H1 (cell line): ENCODE measurements at regions of chr2 and their contacts with region 1.

Region 1: DNA sequence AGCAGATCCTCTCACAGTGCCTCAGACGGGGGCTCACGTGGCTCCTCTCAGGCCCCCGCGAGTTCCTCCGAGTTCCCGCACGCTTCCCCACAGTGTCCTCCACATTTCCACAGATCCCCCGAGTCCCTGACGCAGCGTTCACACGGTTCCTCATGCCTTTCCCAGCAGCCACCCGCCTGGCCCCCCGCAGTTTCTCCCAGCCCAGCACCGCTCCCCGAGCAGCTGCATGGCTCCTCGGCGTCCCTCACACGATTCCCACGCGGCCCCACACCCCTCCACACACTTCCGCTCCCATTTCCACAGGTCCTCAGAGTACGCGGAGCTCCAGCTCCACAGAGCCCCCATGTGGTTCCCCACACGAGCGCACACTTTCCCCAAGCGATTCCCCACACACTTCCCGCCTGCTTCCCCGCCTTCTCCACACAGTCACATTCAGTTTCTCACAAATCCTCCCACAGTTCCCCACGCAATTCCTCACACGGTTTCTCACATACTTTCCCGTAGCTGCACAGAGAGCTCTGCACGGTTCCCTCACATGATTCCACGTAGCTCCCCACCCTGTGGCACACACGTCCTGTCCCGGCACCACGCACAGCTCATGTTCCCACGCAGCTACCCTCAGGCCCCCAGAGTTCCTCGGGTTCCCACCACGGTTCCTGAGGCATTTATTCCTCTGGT is 39.9 kb downstream of the KIF1A start:
- DNase-seq: no peak
- H3K4me3 ChIP-seq: no peak overlapping the region
- H3K27ac ChIP-seq: no peak overlapping the region
- H3K4me1 ChIP-seq: peaks cover 0 to 2% (median 0%) of the 10 kb centered on the region in 4 experiments; a peak in 3 of 7 replicates
- H3K27me3 ChIP-seq: no peaks in the 10 kb centered on the region
- CTCF ChIP-seq: peak in 1 of 3 experiments; percentile 2; a peak in 1 of 4 replicates
- EP300 ChIP-seq: no peak
- POLR2A ChIP-seq: no peak
- RAD21 ChIP-seq: no peak

Region 2: DNA sequence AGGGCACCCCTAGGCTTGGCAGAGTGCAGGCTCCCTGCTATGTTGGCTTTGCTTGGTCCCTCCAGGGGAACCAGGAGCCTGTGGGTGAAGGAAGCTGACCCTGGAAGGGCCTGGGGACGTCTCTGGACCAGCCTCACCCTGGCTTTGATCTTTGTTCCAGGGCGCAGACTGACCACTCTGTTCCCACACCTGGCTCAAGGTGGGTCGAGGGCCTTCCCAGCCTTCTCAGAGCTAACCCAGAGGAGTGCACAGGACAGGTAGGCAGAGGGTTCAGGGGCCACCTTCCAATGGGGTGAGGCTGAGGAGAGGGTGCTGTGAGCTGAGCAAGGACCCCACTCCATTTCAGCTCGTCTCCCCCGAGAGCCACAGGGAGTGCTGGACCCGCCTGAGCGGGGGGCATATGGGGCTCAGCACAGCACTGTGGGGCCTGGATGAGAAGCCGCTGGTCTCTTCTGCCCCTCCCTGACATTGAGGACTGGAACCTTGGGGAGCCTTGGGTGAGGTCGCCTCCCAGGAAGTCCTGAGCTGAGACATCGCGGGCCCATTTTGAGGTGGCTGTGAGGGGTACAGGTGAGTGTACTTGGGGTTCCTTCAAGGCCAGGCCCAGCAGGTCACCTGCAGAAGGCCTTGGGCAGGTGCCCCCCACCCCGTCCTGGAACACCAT is 91.8 kb before region 1 on chr2:
- CTCF ChIA-PET with region 1: no interaction called
- POLR2A ChIA-PET with region 1: no interaction called
- DNase-seq: peak in 1 of 2 experiments; percentile 38
- H3K4me3 ChIP-seq: no peak overlapping the region
- H3K27ac ChIP-seq: no peak overlapping the region
- H3K4me1 ChIP-seq: peaks cover 0 to 3% (median 0%) of the 10 kb centered on the region in 4 experiments; a peak in 2 of 7 replicates
- H3K27me3 ChIP-seq: no peaks in the 10 kb centered on the region; a peak in 1 of 7 replicates
- CTCF ChIP-seq: no peak
- EP300 ChIP-seq: no peak
- POLR2A ChIP-seq: no peak
- RAD21 ChIP-seq: no peak

Region 3: DNA sequence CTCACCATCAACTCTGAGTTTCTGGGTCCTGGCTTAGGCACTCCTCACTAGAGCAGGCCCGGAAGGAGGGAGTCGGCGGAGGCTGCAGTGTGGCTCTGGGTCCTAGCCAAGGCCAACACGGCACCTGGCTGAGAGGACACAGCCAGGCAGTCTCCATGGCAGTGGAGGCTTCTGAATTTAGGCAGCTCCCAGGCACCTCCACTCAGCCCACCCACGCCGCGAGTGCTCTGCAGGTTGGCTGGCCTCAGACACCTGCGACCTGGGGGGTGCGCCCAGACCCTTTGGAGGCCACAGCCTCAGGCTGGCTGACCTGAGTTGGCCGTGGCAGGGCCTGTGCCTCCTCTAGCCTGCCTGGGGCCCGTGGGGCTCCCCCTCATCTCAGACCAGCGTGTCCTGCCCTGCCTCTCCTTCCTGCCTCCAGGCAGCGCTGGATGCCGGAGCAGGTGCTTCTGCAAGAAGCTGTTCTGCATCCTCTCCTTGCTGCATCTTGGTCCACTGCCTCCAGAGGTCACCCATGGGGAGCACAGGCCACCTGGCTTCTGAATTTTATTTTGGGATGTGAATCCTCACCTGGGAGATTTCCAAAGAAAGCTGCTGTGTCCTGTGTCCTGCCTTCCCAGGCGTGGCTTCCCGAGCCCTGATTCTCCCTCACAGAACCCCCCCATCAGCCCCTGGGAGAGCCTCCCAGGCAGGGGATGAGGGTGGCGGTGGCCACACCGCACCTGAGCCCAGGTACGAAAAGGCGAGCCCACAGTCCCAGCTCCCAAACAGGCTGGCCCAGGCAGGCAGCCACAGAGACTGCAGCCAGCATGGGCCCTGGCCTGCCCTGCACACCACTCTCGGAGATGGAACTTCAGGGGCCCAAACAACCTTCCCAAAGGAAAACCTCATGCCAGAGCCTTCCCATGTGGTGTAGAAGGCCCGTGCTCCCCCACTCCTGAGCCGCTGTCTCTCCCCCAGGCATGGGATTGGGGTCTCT is 65.1 kb before region 1 on chr2:
- CTCF ChIA-PET with region 1: no interaction called
- POLR2A ChIA-PET with region 1: interaction called, 19 read pairs
- DNase-seq: no peak
- H3K4me3 ChIP-seq: no peak overlapping the region
- H3K27ac ChIP-seq: no peak overlapping the region
- H3K4me1 ChIP-seq: no peaks in the 10 kb centered on the region; a peak in 1 of 7 replicates
- H3K27me3 ChIP-seq: no peaks in the 10 kb centered on the region
- CTCF ChIP-seq: peak in 2 of 3 experiments; percentile 31 to 47; a peak in 2 of 4 replicates
- EP300 ChIP-seq: no peak
- POLR2A ChIP-seq: no peak
- RAD21 ChIP-seq: peak in 1 of 2 experiments; percentile 16; a peak in 1 of 4 replicates

Region 4: GRCh38 chr2:240725671-240726070 is 54.5 kb before region 1 on chr2:
- CTCF ChIA-PET with region 1: no interaction called
- POLR2A ChIA-PET with region 1: interaction called, 15 read pairs
- DNase-seq: no peak
- H3K4me3 ChIP-seq: no peak overlapping the region
- H3K27ac ChIP-seq: no peak overlapping the region
- H3K4me1 ChIP-seq: no peaks in the 10 kb centered on the region
- H3K27me3 ChIP-seq: no peaks in the 10 kb centered on the region
- CTCF ChIP-seq: no peak
- EP300 ChIP-seq: no peak
- POLR2A ChIP-seq: 0 out of 3 replicates have a peak, but pooled peaks of 1 of the 2 experiments have one; percentile 1
- RAD21 ChIP-seq: no peak

Region 5: GRCh38 chr2:240749516-240749915 is 30.6 kb before region 1 on chr2:
- CTCF ChIA-PET with region 1: interaction called, 3 read pairs
- POLR2A ChIA-PET with region 1: interaction called, 89 read pairs
- DNase-seq: no peak
- H3K4me3 ChIP-seq: no peak overlapping the region
- H3K27ac ChIP-seq: no peak overlapping the region
- H3K4me1 ChIP-seq: no peaks in the 10 kb centered on the region
- H3K27me3 ChIP-seq: no peaks in the 10 kb centered on the region
- CTCF ChIP-seq: no peak
- EP300 ChIP-seq: no peak
- POLR2A ChIP-seq: no peak
- RAD21 ChIP-seq: no peak

Region 6: GRCh38 chr2:240759454-240759853 is 20.7 kb before region 1 on chr2:
- CTCF ChIA-PET with region 1: interaction called, 4 read pairs
- POLR2A ChIA-PET with region 1: interaction called, 291 read pairs
- DNase-seq: no peak
- H3K4me3 ChIP-seq: no peak overlapping the region
- H3K27ac ChIP-seq: no peak overlapping the region
- H3K4me1 ChIP-seq: no peaks in the 10 kb centered on the region; a peak in 1 of 7 replicates
- H3K27me3 ChIP-seq: no peaks in the 10 kb centered on the region
- CTCF ChIP-seq: no peak
- EP300 ChIP-seq: no peak
- POLR2A ChIP-seq: no peak
- RAD21 ChIP-seq: no peak

Region 7: GRCh38 chr2:240791821-240792628 is 11.9 kb after region 1 on chr2:
- CTCF ChIA-PET with region 1: interaction called, 3 read pairs
- POLR2A ChIA-PET with region 1: interaction called, 291 read pairs
- DNase-seq: no peak
- H3K4me3 ChIP-seq: no peak overlapping the region
- H3K27ac ChIP-seq: no peak overlapping the region
- H3K4me1 ChIP-seq: peaks cover 0 to 11% (median 8%) of the 10 kb centered on the region in 4 experiments; a peak in 5 of 7 replicates
- H3K27me3 ChIP-seq: no peaks in the 10 kb centered on the region
- CTCF ChIP-seq: no peak
- EP300 ChIP-seq: no peak
- POLR2A ChIP-seq: no peak
- RAD21 ChIP-seq: no peak

Region 8: GRCh38 chr2:240819858-240820606 is 39.9 kb after region 1 on chr2 and contains the start of gene KIF1A:
- CTCF ChIA-PET with region 1: no interaction called
- POLR2A ChIA-PET with region 1: interaction called, 45 read pairs
- DNase-seq: peak in 1 of 2 experiments; percentile 84
- H3K4me3 ChIP-seq: peak within 1 kb of the TSS; percentile 69 to 100 (median 80)
- H3K27ac ChIP-seq: peak within 1 kb of the TSS; percentile 67; the same call in 1 of the 2 replicates
- H3K4me1 ChIP-seq: peaks cover 0 to 20% (median 16%) of the 10 kb centered on the region in 4 experiments; a peak in 6 of 7 replicates
- H3K27me3 ChIP-seq: peaks cover 0 to 2% (median 0%) of the 10 kb centered on the region in 4 experiments; a peak in 1 of 7 replicates
- CTCF ChIP-seq: no peak
- EP300 ChIP-seq: no peak
- POLR2A ChIP-seq: peak in 1 of 2 experiments; percentile 74; a peak in 2 of 3 replicates
- RAD21 ChIP-seq: no peak
- total RNA-seq, gene KIF1A: 267 and 281 TPM in 2 replicates

Region 9: DNA sequence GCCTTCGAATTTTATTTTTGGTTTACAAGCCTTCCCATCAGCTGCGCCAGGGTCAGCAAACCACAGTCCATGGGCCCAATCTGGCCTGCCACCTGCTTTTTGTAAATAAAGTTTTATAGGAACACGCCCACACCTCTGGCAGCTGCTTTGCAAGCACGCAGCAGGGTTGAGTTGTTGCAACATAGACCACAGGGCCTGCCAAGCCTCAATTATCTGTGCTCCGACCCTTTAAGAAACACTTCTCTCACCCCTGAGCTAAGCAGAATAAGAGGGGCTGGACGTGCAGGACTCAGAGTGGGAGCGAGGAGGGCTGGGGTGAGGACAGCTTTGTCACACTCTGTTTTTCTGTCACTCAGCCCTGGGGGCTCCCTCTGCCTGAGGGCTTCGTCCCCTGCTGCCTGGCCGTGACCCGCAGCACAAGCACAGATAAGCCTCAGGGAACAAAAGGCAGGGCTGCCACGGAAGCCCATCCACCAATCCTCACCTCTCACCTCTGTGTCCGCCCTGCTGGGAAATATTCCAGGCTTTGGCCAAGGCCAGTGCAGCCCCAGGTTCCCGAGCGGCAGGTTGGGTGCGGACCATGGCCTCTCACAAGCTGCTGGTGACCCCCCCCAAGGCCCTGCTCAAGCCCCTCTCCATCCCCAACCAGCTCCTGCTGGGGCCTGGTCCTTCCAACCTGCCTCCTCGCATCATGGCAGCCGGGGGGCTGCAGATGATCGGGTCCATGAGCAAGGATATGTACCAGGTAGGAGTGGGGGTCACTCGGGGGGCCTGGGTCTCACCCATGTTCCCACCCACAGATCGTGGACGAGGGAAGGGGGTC is 88.3 kb after region 1 on chr2 and contains the start of gene AGXT:
- CTCF ChIA-PET with region 1: no interaction called
- POLR2A ChIA-PET with region 1: no interaction called
- DNase-seq: no peak
- H3K4me3 ChIP-seq: no peak within 1 kb of the TSS
- H3K27ac ChIP-seq: no peak within 1 kb of the TSS
- H3K4me1 ChIP-seq: no peaks in the 10 kb centered on the region
- H3K27me3 ChIP-seq: no peaks in the 10 kb centered on the region
- CTCF ChIP-seq: no peak
- EP300 ChIP-seq: no peak
- POLR2A ChIP-seq: no peak
- RAD21 ChIP-seq: no peak
- total RNA-seq, gene AGXT: not detected in 2 replicates

Region 10: DNA sequence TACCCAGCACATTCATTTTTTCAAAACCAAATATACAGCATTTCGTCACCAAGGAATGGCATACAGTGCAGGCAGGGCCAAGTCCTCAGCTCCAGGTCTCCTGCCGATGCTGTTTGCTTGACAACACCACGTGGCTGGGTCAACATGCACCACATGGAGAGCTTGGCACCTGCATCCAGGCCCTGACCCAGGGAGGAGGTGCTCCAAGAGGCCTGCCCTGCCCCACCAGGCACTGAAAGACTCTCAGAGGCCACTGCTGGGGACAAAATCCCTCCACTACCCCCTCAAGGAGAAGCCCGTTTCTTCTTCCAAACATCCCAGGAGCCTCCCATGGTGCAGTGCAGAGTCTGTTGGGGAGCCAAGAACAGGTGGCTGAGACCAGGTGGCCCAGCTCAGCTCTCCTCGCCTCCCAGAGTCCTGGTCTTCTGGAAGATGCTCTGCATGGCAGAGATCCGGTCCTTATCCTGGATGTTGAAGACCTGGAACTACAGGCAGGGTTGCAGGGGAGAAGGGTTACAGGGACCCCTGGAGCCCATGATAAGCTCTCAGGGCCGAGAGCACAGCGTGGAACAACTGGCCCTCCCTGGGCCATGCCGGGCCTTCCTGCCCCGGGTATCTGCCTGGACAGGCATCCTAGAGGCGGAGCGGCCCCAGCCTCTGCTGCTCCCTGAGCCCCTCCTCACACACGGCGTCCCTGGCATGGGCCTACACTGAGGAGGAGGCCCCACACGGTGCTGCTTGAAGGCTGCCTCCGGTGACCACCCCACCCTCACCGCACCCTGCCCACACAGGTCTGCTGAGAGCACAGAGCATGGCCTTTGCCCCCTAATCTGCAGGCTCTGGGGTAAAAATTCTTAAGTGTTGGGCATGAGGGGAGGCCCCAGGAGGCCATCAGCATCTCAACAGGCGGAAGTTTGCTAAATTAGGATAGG is 106.8 kb after region 1 on chr2:
- CTCF ChIA-PET with region 1: no interaction called
- POLR2A ChIA-PET with region 1: no interaction called
- DNase-seq: no peak
- H3K4me3 ChIP-seq: no peak overlapping the region
- H3K27ac ChIP-seq: no peak overlapping the region
- H3K4me1 ChIP-seq: no peaks in the 10 kb centered on the region; a peak in 2 of 7 replicates
- H3K27me3 ChIP-seq: no peaks in the 10 kb centered on the region
- CTCF ChIP-seq: no peak
- EP300 ChIP-seq: no peak
- POLR2A ChIP-seq: no peak
- RAD21 ChIP-seq: no peak

Region 11: DNA sequence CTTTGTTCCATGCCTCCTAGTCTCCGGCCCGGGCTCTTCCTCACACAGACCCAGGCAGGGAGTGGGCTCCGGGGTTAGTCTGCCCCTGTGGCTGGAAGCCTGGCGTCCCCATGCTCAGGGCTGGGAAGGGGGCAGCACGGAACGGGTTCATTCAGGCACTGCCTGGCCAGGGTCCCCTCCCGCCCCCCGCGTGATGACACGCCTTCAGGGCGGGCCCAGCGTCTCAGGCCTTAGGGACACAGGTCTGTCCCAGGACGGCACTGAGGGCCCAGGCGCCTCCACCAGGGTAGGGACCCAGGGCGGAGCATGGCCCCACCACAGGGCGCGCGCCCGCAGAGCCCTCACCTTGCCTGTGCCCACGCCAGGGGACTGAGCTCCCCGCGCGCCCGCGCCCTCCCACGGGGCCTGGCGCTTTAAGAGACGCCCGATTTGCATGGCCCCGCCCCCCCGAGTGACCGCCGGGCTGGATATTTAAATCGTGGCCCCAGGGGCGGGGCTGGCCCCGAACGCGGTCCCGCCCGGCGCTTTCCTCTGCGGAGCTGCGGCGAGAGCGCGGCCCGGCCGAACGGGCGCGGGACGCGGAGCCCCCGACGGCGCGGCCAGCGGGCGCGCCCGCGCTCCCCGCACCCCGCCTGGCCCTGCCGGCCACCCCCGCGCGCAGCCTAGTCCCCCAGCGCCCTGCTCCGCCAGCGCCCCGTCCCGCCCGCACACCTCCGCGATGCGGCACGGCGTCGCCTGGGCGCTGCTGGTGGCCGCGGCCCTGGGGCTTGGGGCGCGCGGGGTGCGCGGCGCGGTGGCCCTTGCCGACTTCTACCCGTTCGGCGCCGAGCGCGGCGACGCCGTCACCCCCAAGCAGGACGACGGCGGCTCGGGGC is 218.2 kb after region 1 on chr2 and contains the start of gene SNED1:
- CTCF ChIA-PET with region 1: no interaction called
- POLR2A ChIA-PET with region 1: no interaction called
- DNase-seq: peak in 1 of 2 experiments; percentile 93
- H3K4me3 ChIP-seq: peak within 1 kb of the TSS; percentile 61 to 85 (median 72)
- H3K27ac ChIP-seq: 0 out of 2 replicates have a peak within 1 kb of the TSS, but pooled peaks have one; percentile 23
- H3K4me1 ChIP-seq: peaks cover 0 to 6% (median 2%) of the 10 kb centered on the region in 4 experiments; a peak in 3 of 7 replicates
- H3K27me3 ChIP-seq: peaks cover 5 to 27% (median 15%) of the 10 kb centered on the region in 4 experiments
- CTCF ChIP-seq: no peak; a peak in 1 of 4 replicates
- EP300 ChIP-seq: no peak
- POLR2A ChIP-seq: 0 out of 3 replicates have a peak, but pooled peaks of 1 of the 2 experiments have one; percentile 44
- RAD21 ChIP-seq: no peak; a peak in 1 of 4 replicates
- total RNA-seq, gene SNED1: 1.9 and 2.4 TPM in 2 replicates